Left ventricle myocardium inferior (tissue), 1 donor: ENCODE measurements at regions of chr2 and their contacts with region 1.

Region 1: GRCh38 chr2:88159955-88160415 is 10.2 kb upstream of the THNSL2 start:
- DNase-seq: no peak
- H3K4me3 ChIP-seq: no peak overlapping the region
- H3K27ac ChIP-seq: no peak overlapping the region
- H3K4me1 ChIP-seq: no peaks in the 10 kb centered on the region
- H3K27me3 ChIP-seq: no peaks in the 10 kb centered on the region
- CTCF ChIP-seq: peak; percentile 91

Region 2: DNA sequence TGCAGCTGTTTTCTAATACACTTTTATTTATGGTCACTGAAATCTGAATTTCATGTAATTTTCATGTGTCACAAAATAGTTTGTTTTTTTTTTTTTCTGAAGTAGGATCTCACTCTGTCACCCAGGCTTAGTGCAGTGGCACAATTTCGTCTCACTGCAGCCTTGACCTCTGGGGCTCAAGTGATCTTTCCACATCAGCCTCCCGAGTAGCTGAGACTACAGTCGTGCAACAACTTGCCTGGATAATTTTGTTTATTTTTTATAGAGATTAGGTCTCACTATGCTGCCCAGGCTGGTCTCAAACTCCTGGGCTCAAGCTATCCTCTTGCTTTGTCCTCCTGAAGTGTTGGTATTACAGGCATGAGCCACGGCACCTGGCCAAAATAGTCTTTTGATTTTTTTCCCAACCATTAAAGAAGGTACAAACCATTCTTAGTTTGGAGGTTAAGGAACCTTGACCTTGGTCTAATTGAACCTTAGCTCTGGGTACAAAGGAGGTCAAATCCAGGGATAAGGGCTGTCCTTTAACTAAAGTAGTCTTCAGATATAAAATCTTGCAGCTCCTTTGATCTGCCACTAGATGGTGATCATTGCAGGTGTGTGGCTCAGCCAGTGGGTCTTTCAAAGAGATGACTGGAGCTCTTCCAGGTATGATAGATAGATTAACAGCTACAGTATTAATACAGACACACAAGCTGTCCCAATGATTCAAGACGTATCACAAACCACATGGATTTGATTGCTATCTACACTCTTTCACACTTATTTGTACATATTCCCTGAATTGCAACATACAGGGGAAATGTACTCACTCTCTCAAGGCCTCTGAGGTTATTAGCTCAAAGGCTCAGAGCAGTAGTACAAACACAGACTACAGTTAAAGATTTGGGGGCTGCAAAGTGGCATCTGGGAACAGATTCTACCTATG is 99.7 kb before region 1 on chr2:
- intact Hi-C with region 1: loop called (anchors 5 kb)
- DNase-seq: no peak
- H3K4me3 ChIP-seq: no peak overlapping the region
- H3K27ac ChIP-seq: no peak overlapping the region
- H3K4me1 ChIP-seq: peaks cover 8% of the 10 kb centered on the region
- H3K27me3 ChIP-seq: no peaks in the 10 kb centered on the region
- CTCF ChIP-seq: peak; percentile 89